ENCODE measurements at regions of chr2 and their contacts with region 1.

Region 1: DNA sequence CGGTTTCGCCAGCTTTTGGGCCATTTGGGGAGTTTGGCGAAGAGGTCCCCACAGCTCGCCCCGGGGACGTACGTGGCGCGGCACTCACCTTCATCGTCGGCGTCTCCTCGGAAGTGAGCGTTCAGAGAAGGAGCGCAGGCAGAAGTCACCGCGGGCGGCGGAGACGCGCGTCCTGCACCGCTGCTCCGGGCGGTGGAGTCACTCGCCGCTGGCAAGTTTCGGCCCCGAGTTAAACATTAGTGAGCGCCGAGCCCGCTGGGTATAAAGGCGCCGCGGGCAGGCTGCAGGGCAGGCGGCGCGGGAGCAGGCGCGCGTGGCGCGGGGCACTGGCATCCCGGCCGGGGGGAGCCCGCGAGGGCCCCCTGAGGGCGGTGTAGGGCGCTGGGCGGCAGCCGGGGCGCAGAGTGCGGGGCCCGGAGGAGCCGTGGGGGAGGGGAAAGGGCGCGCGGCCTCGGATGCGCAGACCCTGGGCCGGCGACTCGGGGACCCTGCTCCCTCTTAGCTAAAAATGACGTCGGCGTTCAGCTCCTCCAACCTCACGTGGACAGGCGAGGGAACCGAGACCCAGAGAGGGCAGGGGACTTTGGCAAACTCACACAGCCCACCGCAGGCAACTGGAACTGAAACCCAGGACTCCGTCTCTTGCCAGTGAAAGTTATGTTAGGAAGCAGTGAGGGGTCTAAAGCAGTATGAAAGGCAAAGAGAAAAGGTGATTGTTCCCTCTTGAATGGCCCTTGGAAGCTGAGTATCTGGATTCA is at the start of gene DPP4:
- DNase-seq: peak; percentile 19 to 77 (median 49)
- ATAC-seq: peak; percentile 80
- H3K4me3 ChIP-seq: peak within 1 kb of the TSS; percentile 79 to 83
- H3K4me3 Mint-ChIP-seq: peak within 1 kb of the TSS; percentile 96
- H3K27ac ChIP-seq: peak within 1 kb of the TSS; percentile 31 to 67
- H3K27ac Mint-ChIP-seq: peak within 1 kb of the TSS; percentile 93
- H3K4me1 ChIP-seq: peaks cover 26% of the 10 kb centered on the region
- H3K4me1 Mint-ChIP-seq: peaks cover 49% of the 10 kb centered on the region
- H3K27me3 ChIP-seq: no peaks in the 10 kb centered on the region
- H3K27me3 Mint-ChIP-seq: no peaks in the 10 kb centered on the region
- CTCF ChIP-seq: no peak
- total RNA-seq, gene DPP4: 13.5 to 15.4 TPM

Region 2: DNA sequence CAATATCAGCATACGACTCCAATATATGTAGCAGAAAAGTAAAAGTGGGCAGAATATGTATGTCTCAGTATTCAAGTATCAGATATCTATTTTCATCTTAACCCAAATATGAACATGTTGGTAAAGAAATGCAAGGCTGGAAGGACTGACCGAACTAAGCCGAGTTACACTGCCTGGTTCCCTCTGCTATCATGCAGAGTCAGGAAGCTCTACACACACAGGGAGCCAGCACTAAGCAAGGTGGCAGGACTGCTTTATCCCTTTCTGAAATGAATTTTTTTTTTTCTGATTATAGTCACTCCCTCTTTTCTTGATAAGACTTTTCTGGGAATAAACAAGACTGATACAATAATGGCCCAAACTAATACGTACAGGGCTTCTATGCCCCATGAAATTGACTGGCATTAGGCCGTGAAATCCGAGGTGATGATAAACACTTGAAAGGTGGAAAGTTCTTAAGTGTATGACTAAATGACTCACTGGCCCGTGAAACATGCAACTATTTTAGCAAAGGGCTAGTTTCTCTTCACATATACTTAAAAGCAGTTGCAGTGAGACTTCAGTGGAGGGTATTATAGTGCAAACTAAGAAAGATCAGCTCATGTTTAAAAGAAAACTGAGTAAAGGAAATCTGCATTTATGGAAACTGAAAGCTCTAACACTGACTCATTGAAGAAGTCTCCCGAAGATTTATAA is 14.9 kb before region 1 on chr2:
- CTCF ChIA-PET with region 1: interaction called, 4 read pairs
- POLR2A ChIA-PET with region 1: interaction called, 11 read pairs
- intact Hi-C with region 1: loop called in 1 of 2 experiments (anchors 1 kb)
- DNase-seq: peak in 1 of 9 experiments; percentile 24
- ATAC-seq: peak; percentile 49
- H3K4me3 ChIP-seq: no peak overlapping the region
- H3K4me3 Mint-ChIP-seq: peak overlapping the region; percentile 64
- H3K27ac ChIP-seq: no peak overlapping the region
- H3K27ac Mint-ChIP-seq: peak overlapping the region; percentile 68
- H3K4me1 ChIP-seq: peaks cover 50% of the 10 kb centered on the region
- H3K4me1 Mint-ChIP-seq: peaks cover 77% of the 10 kb centered on the region
- H3K27me3 ChIP-seq: no peaks in the 10 kb centered on the region
- H3K27me3 Mint-ChIP-seq: no peaks in the 10 kb centered on the region
- CTCF ChIP-seq: no peak

Measured in CD8-positive, alpha-beta T cell (primary cell).